IMR-90 (cell line): ENCODE measurements at regions of chr16 and their contacts with region 1.

Region 1: GRCh38 chr16:89560378-89561141 is at the start of gene RPL13:
- DNase-seq: peak; percentile 94
- ATAC-seq: peak; percentile 86
- H3K4me3 ChIP-seq: peak within 1 kb of the TSS; percentile 71
- H3K27ac ChIP-seq: peak within 1 kb of the TSS; percentile 93
- H3K4me1 ChIP-seq: peaks cover 16% of the 10 kb centered on the region
- H3K27me3 ChIP-seq: no peaks in the 10 kb centered on the region
- CTCF ChIP-seq: no peak
- POLR2A ChIP-seq: peak; percentile 99
- RAD21 ChIP-seq: no peak
- total RNA-seq, gene RPL13: 1,549 and 2,098 TPM in 2 replicates

Region 2: GRCh38 chr16:89330177-89330856 is 230.2 kb before region 1 on chr16:
- CTCF ChIA-PET with region 1: no interaction called
- POLR2A ChIA-PET with region 1: no interaction called
- dilution Hi-C with region 1: no loop called
- in situ Hi-C with region 1: no loop called
- intact Hi-C with region 1: loop called (anchors 2 kb)
- DNase-seq: peak; percentile 52
- ATAC-seq: no peak
- H3K4me3 ChIP-seq: no peak overlapping the region
- H3K27ac ChIP-seq: peak overlapping the region; percentile 12
- H3K4me1 ChIP-seq: peaks cover 37% of the 10 kb centered on the region
- H3K27me3 ChIP-seq: no peaks in the 10 kb centered on the region
- CTCF ChIP-seq: no peak
- POLR2A ChIP-seq: no peak
- RAD21 ChIP-seq: no peak

Region 3: DNA sequence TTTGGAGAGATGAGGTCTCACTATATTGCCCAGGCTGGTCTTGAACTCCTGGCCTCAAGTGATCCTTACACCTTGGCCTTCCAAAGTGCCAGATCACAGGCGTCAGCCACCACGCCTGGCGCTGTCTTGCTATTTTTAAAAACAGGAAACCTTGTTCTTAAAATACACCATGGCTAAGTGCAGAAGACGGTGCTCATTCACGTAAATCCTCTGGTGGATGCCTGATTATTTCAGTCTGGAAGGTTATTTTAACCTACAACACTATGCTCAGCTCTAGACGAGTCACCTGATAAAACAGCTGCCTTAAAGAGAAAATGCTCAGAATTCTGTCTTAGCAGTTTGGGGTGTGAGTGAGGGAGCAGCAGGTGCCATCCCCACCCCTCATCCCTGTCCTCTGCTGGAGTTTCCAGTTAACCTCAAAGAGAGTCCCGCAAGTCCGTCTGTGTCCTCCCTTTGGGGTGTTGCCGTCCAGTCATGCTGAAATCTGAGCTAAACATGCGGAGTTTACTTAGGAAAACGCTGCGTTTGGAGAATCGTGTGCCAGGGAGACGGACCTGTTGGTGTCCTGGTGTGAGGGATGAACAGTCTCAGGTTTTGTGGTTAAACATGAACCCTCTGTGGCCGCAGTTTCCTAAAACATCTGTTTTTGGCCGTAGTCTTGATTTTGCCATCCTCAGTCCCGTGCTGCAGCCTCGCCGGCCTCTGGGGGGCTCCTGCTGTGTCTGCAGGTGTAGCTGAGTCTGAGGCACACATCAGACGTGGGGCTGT is 35.2 kb before region 1 on chr16:
- CTCF ChIA-PET with region 1: no interaction called
- POLR2A ChIA-PET with region 1: interaction called, 12 read pairs
- dilution Hi-C with region 1: no loop called
- in situ Hi-C with region 1: no loop called
- intact Hi-C with region 1: no loop called
- DNase-seq: no peak
- ATAC-seq: no peak
- H3K4me3 ChIP-seq: no peak overlapping the region
- H3K27ac ChIP-seq: no peak overlapping the region
- H3K4me1 ChIP-seq: no peaks in the 10 kb centered on the region
- H3K27me3 ChIP-seq: no peaks in the 10 kb centered on the region
- CTCF ChIP-seq: no peak
- POLR2A ChIP-seq: no peak
- RAD21 ChIP-seq: no peak

Region 4: GRCh38 chr16:89581045-89581690 is 20.6 kb after region 1 on chr16:
- CTCF ChIA-PET with region 1: no interaction called
- POLR2A ChIA-PET with region 1: no interaction called
- dilution Hi-C with region 1: no loop called
- in situ Hi-C with region 1: no loop called
- intact Hi-C with region 1: no loop called
- DNase-seq: peak; percentile 99
- ATAC-seq: peak; percentile 92
- H3K4me3 ChIP-seq: no peak overlapping the region
- H3K27ac ChIP-seq: peak overlapping the region; percentile 91
- H3K4me1 ChIP-seq: peaks cover 17% of the 10 kb centered on the region
- H3K27me3 ChIP-seq: no peaks in the 10 kb centered on the region
- CTCF ChIP-seq: no peak
- POLR2A ChIP-seq: no peak
- RAD21 ChIP-seq: no peak

Region 5: DNA sequence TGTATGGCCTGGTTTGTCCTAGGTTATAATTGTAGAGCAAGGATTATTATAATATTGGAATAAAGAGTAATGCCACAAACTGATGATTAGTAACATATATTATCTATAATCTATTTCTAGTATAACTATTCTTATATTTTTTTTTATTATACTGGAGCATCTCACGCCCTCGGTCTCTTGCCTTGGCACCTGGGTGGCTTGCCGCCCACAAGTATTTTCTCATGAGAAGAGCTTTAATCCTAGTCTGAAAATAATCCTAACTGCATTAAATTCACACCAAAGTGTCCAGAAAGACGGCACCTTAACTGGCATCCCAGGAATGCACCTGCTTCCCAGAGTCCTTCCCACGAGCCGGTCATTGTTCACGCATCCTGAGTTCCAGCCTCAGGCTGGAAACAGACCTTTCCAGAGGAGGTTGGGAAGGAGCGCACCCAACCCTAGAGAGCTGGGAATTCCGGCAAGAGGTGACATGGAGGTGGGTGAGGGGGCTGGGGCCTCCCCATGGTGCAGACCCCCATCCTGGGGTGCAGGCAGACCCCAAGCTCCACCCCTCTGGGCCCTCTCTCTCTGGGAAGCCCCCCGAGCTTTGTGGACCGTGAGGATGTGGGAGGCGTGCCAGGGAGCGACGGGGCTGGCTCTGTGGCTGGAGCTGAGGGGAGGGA is 81.0 kb after region 1 on chr16:
- CTCF ChIA-PET with region 1: no interaction called
- POLR2A ChIA-PET with region 1: no interaction called
- dilution Hi-C with region 1: no loop called
- in situ Hi-C with region 1: no loop called
- intact Hi-C with region 1: loop called (anchors 2 kb)
- DNase-seq: no peak
- ATAC-seq: no peak; the same call in 1 of the 2 replicates
- H3K4me3 ChIP-seq: no peak overlapping the region
- H3K27ac ChIP-seq: no peak overlapping the region
- H3K4me1 ChIP-seq: peaks cover 2% of the 10 kb centered on the region; the same call in 1 of the 2 replicates
- H3K27me3 ChIP-seq: no peaks in the 10 kb centered on the region; the same call in 1 of the 2 replicates
- CTCF ChIP-seq: no peak
- POLR2A ChIP-seq: no peak
- RAD21 ChIP-seq: no peak

Region 6: GRCh38 chr16:89720813-89721545 is 160.4 kb after region 1 on chr16 and contains the starts of genes VPS9D1 and ZNF276:
- CTCF ChIA-PET with region 1: no interaction called
- POLR2A ChIA-PET with region 1: no interaction called
- dilution Hi-C with region 1: no loop called
- in situ Hi-C with region 1: no loop called
- intact Hi-C with region 1: no loop called
- DNase-seq: peak; percentile 69
- ATAC-seq: peak; percentile 74
- H3K4me3 ChIP-seq: peak within 1 kb of the TSS; percentile 94
- H3K27ac ChIP-seq: peak within 1 kb of the TSS; percentile 94
- H3K4me1 ChIP-seq: peaks cover 17% of the 10 kb centered on the region
- H3K27me3 ChIP-seq: no peaks in the 10 kb centered on the region
- CTCF ChIP-seq: no peak
- POLR2A ChIP-seq: peak; percentile 67
- RAD21 ChIP-seq: no peak
- total RNA-seq, gene VPS9D1: 1.8 and 1.9 TPM in 2 replicates
- total RNA-seq, gene ZNF276: 4.1 and 4.2 TPM in 2 replicates